ENCODE measurements at regions of chr1 and their contacts with region 1.

Region 1: DNA sequence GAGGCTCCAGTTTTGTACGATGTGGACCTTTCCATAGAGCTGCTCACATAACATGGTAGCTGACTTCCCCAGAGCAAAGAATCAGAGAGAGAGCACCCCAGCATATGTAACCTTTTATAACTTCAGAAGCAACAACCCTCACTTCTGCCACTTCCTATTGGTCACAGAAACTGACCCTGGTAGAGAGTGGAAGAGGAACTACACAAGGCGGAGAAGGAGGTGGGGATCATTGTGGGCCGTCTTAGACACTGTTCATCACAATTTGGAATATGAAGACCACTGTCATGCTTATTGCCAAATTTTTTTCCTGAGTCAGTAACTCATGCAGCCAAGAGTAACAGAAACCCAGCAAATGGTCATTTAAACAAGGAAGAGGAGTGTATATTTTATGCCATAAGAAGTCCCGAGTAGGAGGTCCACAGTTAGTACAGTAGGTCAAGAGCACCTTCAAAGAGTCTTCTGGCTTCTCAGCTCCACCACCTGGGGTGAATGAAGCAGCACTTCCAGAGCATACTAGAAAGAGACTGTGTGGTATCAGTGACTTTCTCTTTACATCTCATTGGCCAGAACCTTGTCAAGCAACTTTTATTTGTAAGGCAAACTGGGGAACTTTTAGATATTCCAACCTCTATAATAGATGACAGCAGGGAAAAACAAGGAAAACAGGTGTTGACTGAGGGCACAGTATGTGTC is 71.8 kb downstream of the ODF2L start:
- DNase-seq: no peak
- ATAC-seq: no peak
- H3K4me3 ChIP-seq: no peak overlapping the region
- H3K27ac ChIP-seq: no peak overlapping the region
- H3K4me1 ChIP-seq: no peaks in the 10 kb centered on the region
- H3K27me3 ChIP-seq: no peaks in the 10 kb centered on the region
- CTCF ChIP-seq: no peak
- POLR2A ChIP-seq: no peak

Region 2: DNA sequence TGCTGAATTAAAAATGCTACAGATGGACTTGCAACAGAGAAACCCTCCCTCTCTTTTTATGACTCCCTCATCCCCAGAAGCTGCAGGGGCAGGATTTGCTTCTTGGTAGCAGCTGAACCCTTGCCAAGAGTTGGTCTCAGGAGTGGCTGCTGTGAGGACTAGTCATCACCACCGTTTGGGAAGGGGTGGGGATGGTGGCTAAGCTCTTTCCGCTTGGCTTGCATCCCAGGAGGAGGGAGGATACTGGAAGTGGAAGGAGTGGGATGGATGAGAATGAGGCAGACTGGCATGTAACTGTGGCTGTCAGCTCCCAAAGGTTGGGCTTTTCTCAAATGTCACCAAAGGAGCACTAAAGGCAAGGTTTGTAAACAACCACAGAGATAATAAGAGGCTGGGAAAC is 117.0 kb before region 1 on chr1:
- in situ Hi-C with region 1: loop called in 1 of 4 experiments (anchors 25 kb)
- intact Hi-C with region 1: no loop called
- DNase-seq: no peak
- ATAC-seq: no peak
- H3K4me3 ChIP-seq: no peak overlapping the region
- H3K27ac ChIP-seq: no peak overlapping the region
- H3K4me1 ChIP-seq: no peaks in the 10 kb centered on the region
- H3K27me3 ChIP-seq: no peaks in the 10 kb centered on the region
- CTCF ChIP-seq: no peak
- POLR2A ChIP-seq: no peak

Region 3: DNA sequence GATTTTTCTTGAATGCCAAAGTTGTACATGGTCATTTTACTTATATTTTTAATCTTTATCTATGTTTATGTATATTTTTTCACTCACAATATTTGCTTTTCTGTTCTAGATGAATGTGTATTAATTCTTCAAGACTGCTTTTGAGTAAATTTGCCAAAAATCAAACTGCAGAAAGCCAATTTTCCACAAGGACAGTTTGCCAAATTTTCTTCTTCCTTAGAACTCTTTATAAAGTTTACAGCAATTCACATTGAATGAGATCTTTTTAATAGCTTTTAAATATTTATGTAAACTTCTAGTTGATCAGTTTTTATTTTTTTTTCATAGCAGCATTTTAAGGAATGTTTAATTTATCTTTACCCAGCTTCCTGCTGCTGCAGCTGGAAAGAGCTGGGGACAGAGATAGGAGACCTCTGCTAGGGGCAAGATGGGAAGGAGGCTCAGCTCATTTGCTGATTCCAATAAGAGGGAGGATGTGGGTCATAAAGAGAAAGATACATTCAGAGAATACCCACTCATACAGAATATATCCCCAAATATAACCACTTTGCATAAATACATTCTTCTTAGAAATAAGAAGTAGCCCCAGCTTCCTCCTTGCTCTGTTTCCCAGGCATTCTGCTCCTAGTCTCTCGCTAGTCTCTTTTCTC is 21.1 kb before region 1 on chr1:
- in situ Hi-C with region 1: no loop called
- intact Hi-C with region 1: no loop called
- DNase-seq: no peak
- ATAC-seq: no peak
- H3K4me3 ChIP-seq: no peak overlapping the region
- H3K27ac ChIP-seq: no peak overlapping the region
- H3K4me1 ChIP-seq: no peaks in the 10 kb centered on the region
- H3K27me3 ChIP-seq: no peaks in the 10 kb centered on the region
- CTCF ChIP-seq: no peak
- POLR2A ChIP-seq: no peak

Region 4: DNA sequence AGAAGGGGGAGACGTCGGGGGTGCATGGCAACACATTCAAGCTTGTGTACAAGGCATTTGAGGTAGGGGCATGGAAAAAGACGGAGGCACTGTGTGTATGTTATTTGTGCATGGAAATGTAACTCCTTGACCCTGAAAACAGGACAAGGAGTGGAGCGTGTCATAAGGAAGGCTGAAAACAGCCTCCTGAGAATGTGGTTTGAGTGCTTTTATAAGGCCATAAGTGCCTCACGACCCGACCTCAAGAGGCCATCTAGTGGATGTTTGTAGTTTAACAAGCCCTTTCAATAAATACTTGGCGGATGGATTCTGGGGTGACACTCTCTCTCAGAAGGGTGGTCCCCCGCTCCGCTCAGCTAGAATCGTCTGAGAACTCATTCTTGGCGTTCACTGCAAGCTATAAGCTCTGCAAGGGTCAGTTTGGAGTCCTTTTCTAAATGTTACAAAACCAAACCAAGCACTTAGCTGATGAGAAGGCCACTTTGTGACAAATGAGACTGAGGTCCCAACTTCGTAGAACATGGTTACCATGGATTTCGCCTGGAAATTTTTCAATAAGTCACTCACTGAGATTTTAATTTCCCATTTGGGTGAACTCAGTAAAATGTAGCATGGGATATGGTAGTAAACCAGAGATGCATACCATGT is 183.8 kb after region 1 on chr1:
- in situ Hi-C with region 1: no loop called
- intact Hi-C with region 1: no loop called
- DNase-seq: no peak
- ATAC-seq: no peak
- H3K4me3 ChIP-seq: no peak overlapping the region
- H3K27ac ChIP-seq: no peak overlapping the region
- H3K4me1 ChIP-seq: no peaks in the 10 kb centered on the region
- H3K27me3 ChIP-seq: no peaks in the 10 kb centered on the region
- CTCF ChIP-seq: peak in 3 of 5 experiments; percentile 21 to 42 (median 32)
- POLR2A ChIP-seq: no peak